CD4-positive, alpha-beta T cell (primary cell): ENCODE measurements at regions of chr3 and their contacts with region 1.

Region 1: DNA sequence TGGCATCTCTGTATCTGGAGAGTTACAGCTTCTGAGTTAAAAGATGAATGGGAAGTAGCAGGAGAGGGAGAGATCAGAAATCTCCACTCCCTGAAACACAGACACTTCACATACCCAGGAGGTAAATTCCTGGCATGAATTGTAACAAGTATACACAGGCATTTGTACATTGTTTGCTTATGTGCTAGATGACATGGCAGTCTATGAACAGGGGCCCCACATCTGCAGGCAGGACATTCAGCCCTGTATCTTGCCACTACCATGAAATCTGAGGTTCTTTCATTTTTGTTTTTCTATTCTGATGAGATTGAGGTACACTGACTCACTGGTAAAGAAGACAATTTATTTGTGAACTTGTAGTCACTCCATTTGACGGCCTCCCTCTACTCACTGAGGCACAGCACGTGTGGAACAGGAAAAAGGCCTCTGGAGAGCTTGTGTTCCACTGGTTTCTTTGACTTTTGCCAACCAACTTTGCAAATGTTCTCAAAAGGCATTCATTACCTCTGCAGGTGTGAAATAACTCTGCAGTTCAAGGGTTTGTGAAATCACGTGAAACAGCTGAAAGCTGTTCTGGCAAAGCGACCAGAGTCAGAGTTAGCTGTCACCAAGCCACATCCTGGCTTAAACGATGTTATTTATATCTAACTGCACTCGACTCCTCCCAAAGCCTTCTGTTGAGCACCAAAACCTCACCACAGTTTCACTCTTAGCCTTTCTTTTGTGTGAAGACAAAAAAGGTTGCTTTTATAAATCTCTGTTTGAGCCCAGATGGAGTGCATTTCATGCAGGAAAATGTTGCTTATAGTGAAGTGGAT is 401.3 kb upstream of the CFAP20DC start:
- DNase-seq: peak; percentile 20 to 94 (median 50)
- ATAC-seq: peak; percentile 91
- H3K4me3 ChIP-seq: peak overlapping the region; percentile 0
- H3K4me3 Mint-ChIP-seq: peak overlapping the region; percentile 38
- H3K27ac ChIP-seq: peak overlapping the region; percentile 61 to 91
- H3K27ac Mint-ChIP-seq: peak overlapping the region; percentile 96
- H3K4me1 ChIP-seq: peaks cover 57% of the 10 kb centered on the region
- H3K4me1 Mint-ChIP-seq: peaks cover 86% of the 10 kb centered on the region
- H3K27me3 ChIP-seq: no peaks in the 10 kb centered on the region
- H3K27me3 Mint-ChIP-seq: no peaks in the 10 kb centered on the region
- CTCF ChIP-seq: no peak

Region 2: DNA sequence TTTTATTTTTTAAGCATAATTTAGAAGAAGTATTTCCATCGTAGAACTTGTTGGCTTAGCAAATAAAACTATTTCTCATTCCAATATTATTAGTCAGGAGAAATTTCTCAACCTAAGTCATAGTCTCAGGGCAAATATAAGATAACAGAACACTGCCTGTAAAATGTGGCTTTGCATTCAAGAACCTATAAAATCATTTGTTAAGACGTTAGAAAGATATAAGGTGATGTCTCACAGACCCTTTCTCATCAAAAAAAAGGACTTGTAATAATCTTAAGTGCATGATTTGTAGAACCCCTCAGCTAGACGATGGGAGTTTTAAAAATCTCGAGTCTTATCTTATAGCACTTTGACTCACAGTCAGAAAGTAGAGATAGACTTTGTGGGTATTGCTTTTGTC is 86.7 kb before region 1 on chr3:
- CTCF ChIA-PET with region 1: no interaction called
- POLR2A ChIA-PET with region 1: no interaction called
- intact Hi-C with region 1: no loop called
- DNase-seq: no peak
- ATAC-seq: no peak
- H3K4me3 ChIP-seq: no peak overlapping the region
- H3K4me3 Mint-ChIP-seq: no peak overlapping the region
- H3K27ac ChIP-seq: no peak overlapping the region
- H3K27ac Mint-ChIP-seq: no peak overlapping the region
- H3K4me1 ChIP-seq: no peaks in the 10 kb centered on the region
- H3K4me1 Mint-ChIP-seq: peaks cover 15% of the 10 kb centered on the region
- H3K27me3 ChIP-seq: no peaks in the 10 kb centered on the region
- H3K27me3 Mint-ChIP-seq: no peaks in the 10 kb centered on the region
- CTCF ChIP-seq: no peak

Region 3: GRCh38 chr3:59436164-59436958 is 14.8 kb before region 1 on chr3:
- CTCF ChIA-PET with region 1: no interaction called
- POLR2A ChIA-PET with region 1: interaction called, 6 read pairs
- intact Hi-C with region 1: loop called (anchors 1 to 2 kb)
- DNase-seq: peak in 5 of 14 experiments; percentile 21 to 40 (median 26)
- ATAC-seq: peak; percentile 84
- H3K4me3 ChIP-seq: no peak overlapping the region
- H3K4me3 Mint-ChIP-seq: peak overlapping the region; percentile 3
- H3K27ac ChIP-seq: no peak overlapping the region
- H3K27ac Mint-ChIP-seq: peak overlapping the region; percentile 82
- H3K4me1 ChIP-seq: no peaks in the 10 kb centered on the region
- H3K4me1 Mint-ChIP-seq: peaks cover 17% of the 10 kb centered on the region
- H3K27me3 ChIP-seq: no peaks in the 10 kb centered on the region
- H3K27me3 Mint-ChIP-seq: no peaks in the 10 kb centered on the region
- CTCF ChIP-seq: no peak

Region 4: DNA sequence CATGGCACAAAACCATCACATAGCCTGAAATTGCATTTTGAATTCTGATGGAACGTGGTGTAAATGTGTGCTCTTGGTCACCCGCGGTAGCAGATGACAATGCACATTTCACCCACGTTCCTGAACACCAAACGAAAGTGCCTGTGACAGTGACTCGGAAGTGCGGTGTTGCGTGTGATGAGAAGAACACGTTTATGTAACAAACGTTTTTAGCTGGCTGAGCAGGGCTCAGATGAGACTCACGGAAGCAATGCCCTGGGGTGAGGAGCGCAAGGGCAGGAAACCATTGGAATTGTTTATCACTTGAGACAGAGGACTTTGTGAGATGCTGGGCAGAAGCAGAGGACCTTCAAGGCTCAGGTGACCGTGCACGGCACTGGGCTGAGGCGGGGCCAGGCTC is 47.8 kb after region 1 on chr3:
- CTCF ChIA-PET with region 1: no interaction called
- POLR2A ChIA-PET with region 1: no interaction called
- intact Hi-C with region 1: no loop called
- DNase-seq: no peak
- ATAC-seq: no peak
- H3K4me3 ChIP-seq: no peak overlapping the region
- H3K4me3 Mint-ChIP-seq: no peak overlapping the region
- H3K27ac ChIP-seq: no peak overlapping the region
- H3K27ac Mint-ChIP-seq: no peak overlapping the region
- H3K4me1 ChIP-seq: no peaks in the 10 kb centered on the region
- H3K4me1 Mint-ChIP-seq: peaks cover 9% of the 10 kb centered on the region
- H3K27me3 ChIP-seq: no peaks in the 10 kb centered on the region
- H3K27me3 Mint-ChIP-seq: no peaks in the 10 kb centered on the region
- CTCF ChIP-seq: no peak

Region 5: DNA sequence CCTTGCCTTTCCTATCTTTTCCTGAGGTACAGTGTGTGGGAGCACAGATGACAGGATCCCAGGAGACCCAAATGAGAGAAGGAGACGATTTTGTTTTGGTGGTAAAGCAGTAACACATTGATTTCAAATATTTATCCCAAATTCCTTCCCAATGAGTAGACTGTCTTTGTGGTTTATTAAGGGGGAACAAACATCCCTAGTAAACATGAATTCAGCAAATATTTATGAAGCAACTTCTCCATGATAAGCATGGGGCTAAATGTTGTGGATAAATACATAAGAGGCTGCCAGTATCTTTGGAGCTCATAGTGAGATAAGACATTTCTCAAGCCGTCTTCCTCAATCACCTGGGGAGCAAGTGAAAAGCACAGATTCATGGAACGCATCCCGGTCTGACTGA is 59.4 kb after region 1 on chr3:
- CTCF ChIA-PET with region 1: no interaction called
- POLR2A ChIA-PET with region 1: no interaction called
- intact Hi-C with region 1: loop called in 1 of 2 experiments (anchors 10 kb)
- DNase-seq: no peak
- ATAC-seq: no peak
- H3K4me3 ChIP-seq: no peak overlapping the region
- H3K4me3 Mint-ChIP-seq: no peak overlapping the region
- H3K27ac ChIP-seq: no peak overlapping the region
- H3K27ac Mint-ChIP-seq: no peak overlapping the region
- H3K4me1 ChIP-seq: no peaks in the 10 kb centered on the region
- H3K4me1 Mint-ChIP-seq: peaks cover 9% of the 10 kb centered on the region
- H3K27me3 ChIP-seq: no peaks in the 10 kb centered on the region
- H3K27me3 Mint-ChIP-seq: no peaks in the 10 kb centered on the region
- CTCF ChIP-seq: no peak

Region 6: DNA sequence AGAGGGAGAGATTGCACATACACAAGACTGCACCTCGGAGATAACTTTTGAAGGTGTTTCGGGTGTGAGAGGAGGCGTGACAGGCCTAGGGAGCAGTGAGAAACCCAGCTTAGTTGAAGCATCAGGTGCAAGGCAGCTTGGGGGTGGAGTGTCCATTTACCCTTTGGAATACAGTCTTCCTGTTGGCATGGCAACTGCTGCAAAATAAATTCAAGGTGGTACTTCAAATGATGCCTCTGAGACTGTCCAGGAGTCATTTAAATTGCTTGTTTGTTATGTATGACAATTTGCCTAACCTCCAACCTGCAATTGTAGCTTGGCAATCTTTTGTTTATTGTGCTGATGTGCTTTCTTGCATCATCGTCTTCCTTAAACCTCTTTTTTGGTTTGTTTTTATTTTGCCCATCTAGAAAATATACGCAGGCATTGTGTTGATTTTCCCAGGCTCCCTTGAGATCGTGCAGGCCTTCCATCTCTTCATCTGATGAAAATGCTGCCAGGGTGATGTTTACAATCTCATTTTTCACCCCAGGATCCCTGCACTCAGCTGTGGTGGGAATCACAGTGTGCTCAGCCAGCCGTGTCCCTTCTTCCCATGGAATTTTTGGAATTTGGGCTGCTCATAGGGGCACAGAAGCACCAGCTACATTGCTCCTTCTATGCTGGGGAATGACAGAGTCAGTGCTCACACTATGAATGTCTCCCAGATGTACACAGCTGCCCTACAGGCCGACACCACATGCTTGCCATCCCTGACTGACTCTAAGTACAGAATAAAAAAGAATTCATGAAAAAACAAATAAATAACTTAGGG is 181.8 kb after region 1 on chr3:
- CTCF ChIA-PET with region 1: no interaction called
- POLR2A ChIA-PET with region 1: no interaction called
- intact Hi-C with region 1: no loop called
- DNase-seq: no peak
- ATAC-seq: no peak
- H3K4me3 ChIP-seq: no peak overlapping the region
- H3K4me3 Mint-ChIP-seq: no peak overlapping the region
- H3K27ac ChIP-seq: no peak overlapping the region
- H3K27ac Mint-ChIP-seq: no peak overlapping the region
- H3K4me1 ChIP-seq: no peaks in the 10 kb centered on the region
- H3K4me1 Mint-ChIP-seq: no peaks in the 10 kb centered on the region
- H3K27me3 ChIP-seq: no peaks in the 10 kb centered on the region
- H3K27me3 Mint-ChIP-seq: no peaks in the 10 kb centered on the region
- CTCF ChIP-seq: no peak

Region 7: DNA sequence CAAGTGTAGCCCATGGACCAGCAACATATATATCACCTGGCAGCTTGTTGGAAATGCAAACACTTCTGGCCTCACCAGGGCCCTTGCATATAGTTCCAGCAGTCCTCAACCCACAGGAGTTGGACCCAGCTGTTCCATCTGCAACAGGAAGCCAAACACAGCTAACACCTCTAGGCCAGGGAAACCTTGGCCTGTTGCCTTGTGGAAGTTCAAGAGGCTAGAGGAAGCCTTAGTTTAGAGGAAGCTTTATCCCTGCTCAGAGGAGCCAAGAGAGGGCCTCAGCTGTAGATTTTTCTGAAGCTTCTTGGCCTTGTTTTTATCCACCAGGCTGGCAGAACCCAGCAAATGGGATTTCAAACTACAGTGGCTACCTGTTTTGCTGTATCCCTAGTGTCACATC is 1788.7 kb after region 1 on chr3:
- CTCF ChIA-PET with region 1: no interaction called
- POLR2A ChIA-PET with region 1: no interaction called
- intact Hi-C with region 1: loop called in 1 of 2 experiments (anchors 10 kb)
- DNase-seq: no peak
- ATAC-seq: no peak
- H3K4me3 ChIP-seq: no peak overlapping the region
- H3K4me3 Mint-ChIP-seq: no peak overlapping the region
- H3K27ac ChIP-seq: no peak overlapping the region
- H3K27ac Mint-ChIP-seq: no peak overlapping the region
- H3K4me1 ChIP-seq: no peaks in the 10 kb centered on the region
- H3K4me1 Mint-ChIP-seq: no peaks in the 10 kb centered on the region
- H3K27me3 ChIP-seq: no peaks in the 10 kb centered on the region
- H3K27me3 Mint-ChIP-seq: no peaks in the 10 kb centered on the region
- CTCF ChIP-seq: no peak